ENCODE measurements at regions of chr3 and their contacts with region 1.

Region 1: DNA sequence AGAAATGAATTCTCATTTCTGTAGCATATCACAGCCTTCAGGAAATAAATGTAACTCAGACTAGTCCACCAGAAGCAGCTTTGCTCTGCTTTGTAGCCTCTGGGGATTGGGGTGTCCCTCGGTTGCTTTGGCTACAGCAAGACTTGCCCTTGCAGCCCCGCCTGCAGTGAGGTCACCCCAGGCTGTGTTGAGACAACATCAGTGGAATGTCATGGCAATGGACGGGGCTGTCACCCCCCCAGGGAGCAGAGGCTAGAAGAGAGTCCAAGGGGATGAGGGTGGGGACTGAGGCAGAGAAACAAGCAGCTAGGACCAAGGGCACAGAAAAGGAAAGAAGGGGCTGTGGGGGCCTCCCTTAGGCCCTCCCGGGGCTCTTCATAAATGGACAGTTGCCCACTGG is 854 bp downstream of the CLEC3B start:
- DNase-seq: no peak
- ATAC-seq: no peak
- H3K4me3 ChIP-seq: no peak overlapping the region
- H3K27ac ChIP-seq: no peak overlapping the region
- H3K4me1 ChIP-seq: no peaks in the 10 kb centered on the region
- H3K27me3 ChIP-seq: no peaks in the 10 kb centered on the region
- CTCF ChIP-seq: no peak

Region 2: DNA sequence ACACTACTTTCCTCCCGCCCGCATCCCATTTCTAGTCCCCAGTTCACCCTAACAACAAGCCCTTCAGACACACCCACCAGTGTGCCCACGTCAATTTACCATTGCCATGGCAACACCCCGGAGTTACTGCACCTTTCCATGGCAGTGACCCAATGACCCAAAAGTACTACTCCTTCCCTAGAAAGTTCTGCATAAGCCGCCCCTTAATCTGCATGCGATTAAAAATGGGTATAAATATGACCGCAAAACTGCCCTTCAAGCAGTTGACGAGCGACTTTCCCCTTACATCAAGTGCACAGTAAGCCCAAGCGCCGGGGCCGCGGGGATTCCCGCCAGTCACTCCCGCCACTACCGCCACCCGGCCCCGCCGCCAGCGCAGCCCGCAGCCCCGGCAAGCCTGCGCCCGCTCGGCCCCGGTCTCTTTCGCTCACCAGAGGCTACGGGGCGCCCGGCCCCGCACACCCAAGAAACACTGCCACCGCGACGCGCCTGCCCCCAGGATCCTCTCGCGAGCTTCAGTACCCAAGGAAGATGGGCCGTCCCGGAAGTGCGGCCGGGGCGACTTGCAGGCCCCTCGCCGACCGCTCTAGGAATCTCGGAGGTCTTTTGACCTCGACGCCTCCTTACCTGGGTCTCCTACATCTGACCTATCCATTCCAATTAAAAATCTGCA is 341.7 kb before region 1 on chr3:
- CTCF ChIA-PET with region 1: no interaction called
- POLR2A ChIA-PET with region 1: no interaction called
- in situ Hi-C with region 1: no loop called
- intact Hi-C with region 1: no loop called
- DNase-seq: no peak
- ATAC-seq: no peak
- H3K4me3 ChIP-seq: peak overlapping the region in 1 of 2 experiments; percentile 33; a peak in 1 of 4 replicates
- H3K27ac ChIP-seq: no peak overlapping the region
- H3K4me1 ChIP-seq: no peaks in the 10 kb centered on the region
- H3K27me3 ChIP-seq: no peaks in the 10 kb centered on the region
- CTCF ChIP-seq: no peak

Region 3: GRCh38 chr3:44942202-44942921 is 84.6 kb before region 1 on chr3:
- CTCF ChIA-PET with region 1: no interaction called
- POLR2A ChIA-PET with region 1: no interaction called
- in situ Hi-C with region 1: no loop called
- intact Hi-C with region 1: no loop called
- DNase-seq: peak; percentile 24
- ATAC-seq: peak; percentile 72; the same call in 1 of the 2 replicates
- H3K4me3 ChIP-seq: no peak overlapping the region
- H3K27ac ChIP-seq: no peak overlapping the region
- H3K4me1 ChIP-seq: no peaks in the 10 kb centered on the region
- H3K27me3 ChIP-seq: no peaks in the 10 kb centered on the region
- CTCF ChIP-seq: no peak

Region 4: DNA sequence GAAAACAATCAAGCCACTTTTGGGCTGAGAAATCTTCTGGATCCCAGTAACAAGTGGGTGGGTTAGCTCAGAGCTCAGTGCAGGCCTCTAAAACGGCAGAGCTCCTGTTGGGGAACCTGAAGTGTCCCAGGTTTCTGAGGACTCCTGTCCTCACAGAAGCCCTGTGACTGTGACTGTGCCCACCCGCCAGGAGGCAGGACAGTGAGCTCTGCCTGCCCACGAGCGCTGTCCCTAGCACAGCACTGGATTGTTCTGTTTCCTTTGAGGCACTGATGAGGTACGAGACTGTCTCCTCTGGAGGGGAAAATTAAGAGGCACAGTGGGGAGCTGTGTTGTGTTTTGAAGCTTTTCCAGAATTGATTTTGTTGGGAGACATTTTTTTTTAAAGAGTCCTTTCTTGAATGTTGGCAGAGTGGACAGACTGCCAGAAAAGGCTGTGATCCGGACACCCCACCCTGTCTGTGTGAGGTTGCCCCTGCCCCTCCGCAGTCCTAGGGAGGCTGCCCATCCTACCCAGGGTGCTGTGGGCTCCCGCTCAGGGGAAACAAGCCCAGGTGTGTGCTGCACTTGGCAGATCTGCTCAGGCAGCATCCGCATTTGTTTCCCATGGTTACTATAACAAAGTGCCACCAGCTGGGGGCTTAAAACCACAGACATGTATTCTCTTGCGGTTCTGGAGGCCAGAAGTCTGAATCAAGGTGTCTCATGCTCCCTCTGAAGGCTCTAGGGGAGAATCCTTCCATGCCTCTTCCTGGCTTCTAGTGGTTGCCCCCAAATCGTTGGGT is 294.8 kb after region 1 on chr3:
- CTCF ChIA-PET with region 1: no interaction called
- POLR2A ChIA-PET with region 1: no interaction called
- in situ Hi-C with region 1: no loop called
- intact Hi-C with region 1: loop called (anchors 10 kb)
- DNase-seq: no peak
- ATAC-seq: no peak
- H3K4me3 ChIP-seq: no peak overlapping the region
- H3K27ac ChIP-seq: no peak overlapping the region
- H3K4me1 ChIP-seq: no peaks in the 10 kb centered on the region
- H3K27me3 ChIP-seq: no peaks in the 10 kb centered on the region
- CTCF ChIP-seq: no peak